CD4-positive, alpha-beta memory T cell (primary cell): ENCODE measurements at regions of chr20 and their contacts with region 1.

Region 1: DNA sequence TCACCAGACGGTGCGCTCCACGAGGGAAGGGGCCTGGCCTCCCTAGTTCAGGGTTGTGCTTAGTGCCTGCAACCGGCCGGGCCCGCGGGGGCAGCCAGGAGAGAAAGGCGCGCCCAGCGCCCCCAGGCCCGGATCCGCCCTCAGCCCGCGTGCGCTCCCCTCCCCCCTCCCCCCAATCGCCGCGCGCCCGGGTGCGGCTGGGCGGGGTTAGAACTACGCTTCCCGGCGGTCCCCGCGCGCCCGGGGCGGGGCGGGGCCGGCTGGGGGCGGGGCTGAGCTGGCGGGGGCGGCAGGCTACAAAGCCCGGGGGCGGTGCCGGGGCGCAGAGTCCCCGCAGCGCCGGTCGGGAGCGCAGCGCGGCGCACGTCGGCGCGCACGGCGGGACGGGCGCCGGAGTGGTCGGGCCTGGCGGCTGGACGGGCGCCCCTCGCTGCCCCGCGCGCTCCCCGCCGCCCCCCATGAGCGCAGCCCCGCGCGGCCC is at the start of gene RBM38:
- DNase-seq: peak; percentile 56 to 78 (median 72)
- H3K4me3 ChIP-seq: peak within 1 kb of the TSS; percentile 81 to 99
- H3K4me3 Mint-ChIP-seq: peak within 1 kb of the TSS; percentile 91 to 100 (median 97)
- H3K27ac ChIP-seq: peak within 1 kb of the TSS; percentile 84
- H3K27ac Mint-ChIP-seq: peak within 1 kb of the TSS; percentile 97 to 100 (median 99)
- H3K4me1 ChIP-seq: peaks cover 50% of the 10 kb centered on the region
- H3K4me1 Mint-ChIP-seq: peaks cover 29 to 64% (median 41%) of the 10 kb centered on the region in 4 donors
- H3K27me3 ChIP-seq: no peaks in the 10 kb centered on the region
- H3K27me3 Mint-ChIP-seq: no peaks in the 10 kb centered on the region
- total RNA-seq, gene RBM38: 76.0 to 79.6 TPM

Region 2: DNA sequence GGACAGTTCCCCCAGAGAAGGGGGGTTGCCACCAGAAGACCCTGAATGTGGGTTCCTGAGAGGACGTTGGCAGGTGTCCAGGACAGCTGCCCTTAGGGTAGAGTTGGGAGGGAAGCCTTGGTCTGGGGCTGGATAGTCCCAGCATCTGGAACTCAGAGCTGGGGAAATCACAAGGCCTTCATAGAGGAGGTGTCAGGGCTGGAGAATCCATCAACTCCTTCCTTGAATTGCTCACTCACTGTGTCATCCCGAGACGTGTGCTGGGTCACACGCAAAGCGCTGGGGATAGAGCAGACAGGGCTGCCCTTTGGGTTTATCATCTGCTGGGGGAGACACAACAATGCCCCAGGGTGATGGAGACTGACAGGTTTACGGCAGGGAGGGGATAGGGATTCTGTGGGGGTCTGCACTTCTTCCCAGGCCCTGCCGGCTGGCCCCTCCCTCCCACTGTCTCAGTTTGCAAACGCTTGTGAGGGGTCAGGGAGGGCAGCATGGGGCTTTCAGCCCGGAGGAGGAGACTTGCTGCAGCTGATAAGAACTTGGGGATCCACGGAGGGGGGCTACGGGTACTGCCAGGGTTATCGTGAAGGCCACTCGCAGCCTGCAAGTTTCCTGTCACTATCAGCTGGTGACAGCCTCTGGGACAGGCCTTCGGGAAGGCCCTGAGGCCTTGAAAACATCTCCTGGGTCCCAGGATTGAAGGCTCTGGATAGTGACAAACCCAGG is 18.7 kb after region 1 on chr20:
- CTCF ChIA-PET with region 1: interaction called, 4 read pairs
- POLR2A ChIA-PET with region 1: interaction called, 150 read pairs
- intact Hi-C with region 1: no loop called
- DNase-seq: peak in 1 of 5 donors; percentile 27
- H3K4me3 ChIP-seq: no peak overlapping the region
- H3K4me3 Mint-ChIP-seq: peak overlapping the region in 1 of 8 donors; percentile 39
- H3K27ac ChIP-seq: no peak overlapping the region
- H3K27ac Mint-ChIP-seq: peak overlapping the region in 5 of 7 donors; percentile 29 to 90 (median 84)
- H3K4me1 ChIP-seq: peaks cover 25% of the 10 kb centered on the region
- H3K4me1 Mint-ChIP-seq: peaks cover 9 to 22% (median 16%) of the 10 kb centered on the region in 4 donors
- H3K27me3 ChIP-seq: no peaks in the 10 kb centered on the region
- H3K27me3 Mint-ChIP-seq: no peaks in the 10 kb centered on the region

Region 3: DNA sequence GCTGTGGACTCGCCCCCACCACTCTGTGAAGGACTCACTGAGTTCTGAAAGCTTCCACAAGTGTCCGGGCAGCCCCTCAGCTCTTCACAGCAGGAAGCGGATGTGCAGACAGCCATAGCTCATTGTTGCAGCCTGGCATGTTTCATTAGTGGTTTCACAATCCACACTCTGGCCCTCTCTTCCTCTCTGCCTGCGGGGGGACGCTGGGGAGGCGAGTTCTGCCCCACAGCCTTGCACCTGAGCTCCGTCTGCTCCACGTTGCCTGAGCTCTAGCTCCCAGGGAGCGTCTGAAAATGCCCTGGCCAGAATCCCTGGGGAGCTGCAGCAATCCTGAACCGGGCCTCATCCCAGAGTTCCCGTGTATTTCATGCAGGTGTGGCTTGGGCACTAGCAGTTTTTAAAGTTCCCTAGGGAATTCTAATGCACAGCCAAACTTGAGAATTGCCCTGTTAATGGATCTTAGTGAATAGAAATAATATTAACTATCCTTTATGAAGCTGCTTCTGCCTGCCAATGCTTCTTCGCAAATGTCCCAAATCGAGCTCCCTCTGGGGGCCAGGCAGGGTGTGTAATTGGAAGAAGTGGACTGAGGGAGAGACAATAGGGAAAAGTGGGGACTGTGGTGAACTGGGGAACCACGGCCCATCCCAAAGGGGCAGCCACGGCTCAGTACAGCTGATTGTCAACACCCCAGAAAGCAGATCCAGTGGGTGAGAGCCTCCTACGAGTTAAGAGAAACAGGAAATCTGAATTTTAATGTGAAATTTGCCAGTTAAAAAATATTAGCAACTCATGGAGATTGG is 82.3 kb after region 1 on chr20:
- CTCF ChIA-PET with region 1: interaction called, 12 read pairs
- POLR2A ChIA-PET with region 1: interaction called, 10 read pairs
- intact Hi-C with region 1: no loop called
- DNase-seq: no peak
- H3K4me3 ChIP-seq: no peak overlapping the region
- H3K4me3 Mint-ChIP-seq: peak overlapping the region in 2 of 8 donors; percentile 37 to 48
- H3K27ac ChIP-seq: no peak overlapping the region
- H3K27ac Mint-ChIP-seq: peak overlapping the region in 2 of 7 donors; percentile 18 to 80
- H3K4me1 ChIP-seq: peaks cover 16% of the 10 kb centered on the region
- H3K4me1 Mint-ChIP-seq: peaks cover 7 to 26% (median 9%) of the 10 kb centered on the region in 4 donors
- H3K27me3 ChIP-seq: no peaks in the 10 kb centered on the region
- H3K27me3 Mint-ChIP-seq: peaks cover 0 to 1% of the 10 kb centered on the region in 2 donors

Region 4: GRCh38 chr20:57509722-57510164 is 118.6 kb after region 1 on chr20:
- CTCF ChIA-PET with region 1: no interaction called
- POLR2A ChIA-PET with region 1: no interaction called
- intact Hi-C with region 1: no loop called
- DNase-seq: no peak
- H3K4me3 ChIP-seq: no peak overlapping the region
- H3K4me3 Mint-ChIP-seq: no peak overlapping the region
- H3K27ac ChIP-seq: no peak overlapping the region
- H3K27ac Mint-ChIP-seq: no peak overlapping the region
- H3K4me1 ChIP-seq: no peaks in the 10 kb centered on the region
- H3K4me1 Mint-ChIP-seq: no peaks in the 10 kb centered on the region
- H3K27me3 ChIP-seq: no peaks in the 10 kb centered on the region
- H3K27me3 Mint-ChIP-seq: peaks cover 9 to 17% of the 10 kb centered on the region in 2 donors

Region 5: GRCh38 chr20:57622579-57623377 is 231.7 kb after region 1 on chr20:
- CTCF ChIA-PET with region 1: no interaction called
- POLR2A ChIA-PET with region 1: interaction called, 27 read pairs
- intact Hi-C with region 1: loop called (anchors 5 kb)
- DNase-seq: peak; percentile 64 to 77 (median 66)
- H3K4me3 ChIP-seq: no peak overlapping the region
- H3K4me3 Mint-ChIP-seq: peak overlapping the region in 6 of 8 donors; percentile 66 to 90 (median 74)
- H3K27ac ChIP-seq: no peak overlapping the region
- H3K27ac Mint-ChIP-seq: peak overlapping the region; percentile 88 to 96 (median 91)
- H3K4me1 ChIP-seq: peaks cover 76% of the 10 kb centered on the region
- H3K4me1 Mint-ChIP-seq: peaks cover 30 to 91% (median 65%) of the 10 kb centered on the region in 4 donors
- H3K27me3 ChIP-seq: no peaks in the 10 kb centered on the region
- H3K27me3 Mint-ChIP-seq: no peaks in the 10 kb centered on the region

Region 6: DNA sequence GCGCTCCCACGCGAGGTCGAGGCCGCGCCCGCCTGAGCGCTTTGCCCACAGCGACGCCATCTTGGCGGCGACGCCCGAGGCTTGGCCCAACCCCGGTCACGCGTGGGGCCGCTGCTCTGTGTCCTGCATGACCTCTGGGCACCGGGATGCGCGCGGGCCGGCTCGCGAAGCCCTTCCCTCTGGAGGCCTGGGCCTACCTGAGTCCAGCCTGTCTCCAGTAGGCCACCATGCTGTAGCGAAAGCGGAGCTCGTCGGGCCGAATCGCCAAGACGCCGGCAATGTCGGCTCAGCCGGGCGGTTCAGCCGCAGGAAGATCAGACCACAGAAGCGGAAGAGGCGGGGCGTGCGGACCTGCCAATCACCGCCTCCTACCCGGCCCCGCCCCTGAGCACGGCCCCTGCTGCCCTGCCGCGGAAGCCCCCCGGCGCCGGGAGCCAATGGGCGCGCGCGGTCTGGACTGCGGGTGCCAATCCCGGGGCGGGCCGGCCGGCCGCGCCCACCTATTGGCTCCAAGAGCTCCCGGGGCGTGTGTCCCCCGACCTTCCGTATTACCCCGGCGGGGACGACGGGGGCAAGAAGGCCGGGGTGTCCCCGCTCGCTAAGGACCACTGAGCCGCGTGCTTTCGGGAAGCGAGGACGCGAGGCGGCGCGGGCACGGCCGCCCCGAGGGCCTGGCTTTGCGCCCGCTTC is 1641.1 kb after region 1 on chr20 and contains the start of gene ATP5F1E:
- CTCF ChIA-PET with region 1: no interaction called
- POLR2A ChIA-PET with region 1: interaction called, 3 read pairs
- intact Hi-C with region 1: loop called (anchors 10 kb)
- DNase-seq: peak; percentile 96 to 97 (median 96)
- H3K4me3 ChIP-seq: peak within 1 kb of the TSS; percentile 71 to 82
- H3K4me3 Mint-ChIP-seq: peak within 1 kb of the TSS; percentile 91 to 97 (median 94)
- H3K27ac ChIP-seq: peak within 1 kb of the TSS; percentile 82
- H3K27ac Mint-ChIP-seq: peak within 1 kb of the TSS; percentile 94 to 98 (median 96)
- H3K4me1 ChIP-seq: peaks cover 50% of the 10 kb centered on the region
- H3K4me1 Mint-ChIP-seq: peaks cover 42 to 63% (median 52%) of the 10 kb centered on the region in 4 donors
- H3K27me3 ChIP-seq: no peaks in the 10 kb centered on the region
- H3K27me3 Mint-ChIP-seq: no peaks in the 10 kb centered on the region
- total RNA-seq, gene ATP5F1E: 77.2 to 84.5 TPM